ENCODE measurements at regions of chr12 and their contacts with region 1.

Region 1: GRCh38 chr12:86712425-86712843 is 456.2 kb upstream of the MGAT4C start:
- DNase-seq: peak; percentile 66
- H3K4me3 ChIP-seq: no peak overlapping the region
- H3K27ac ChIP-seq: no peak overlapping the region
- H3K4me1 ChIP-seq: no peaks in the 10 kb centered on the region
- H3K27me3 ChIP-seq: no peaks in the 10 kb centered on the region
- CTCF ChIP-seq: no peak

Region 2: DNA sequence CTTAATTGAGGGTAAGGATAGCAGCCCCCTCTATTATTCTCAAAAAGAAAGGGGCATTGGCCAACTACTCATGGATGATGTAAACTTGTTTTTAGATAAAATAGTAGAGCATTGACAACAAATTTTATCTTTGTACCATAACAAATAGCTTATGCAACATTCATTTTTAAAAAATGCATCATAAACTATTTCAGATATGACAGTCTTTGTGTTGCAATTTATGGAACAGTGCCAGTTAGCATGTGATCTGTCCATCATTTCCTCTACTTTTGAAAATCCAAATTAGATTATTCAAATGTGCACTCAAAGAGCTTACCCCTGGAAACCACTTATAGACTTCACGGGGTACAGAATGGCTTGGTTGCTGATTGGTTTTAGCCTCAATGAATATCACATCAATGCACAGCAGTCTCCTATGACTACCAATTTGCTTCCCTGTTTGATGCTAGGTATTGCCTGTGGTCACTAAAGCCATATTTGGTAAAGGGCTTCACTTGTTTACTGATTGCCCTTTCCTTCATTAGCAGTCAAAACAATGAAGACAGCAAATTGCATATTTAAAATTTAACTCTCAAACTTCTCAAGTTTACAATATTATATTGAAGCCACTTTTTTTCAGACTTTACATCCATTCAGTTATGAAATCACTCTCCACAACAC is 181.3 kb before region 1 on chr12:
- CTCF ChIA-PET with region 1: no interaction called
- POLR2A ChIA-PET with region 1: no interaction called
- intact Hi-C with region 1: no loop called
- DNase-seq: peak; percentile 58
- H3K4me3 ChIP-seq: no peak overlapping the region
- H3K27ac ChIP-seq: no peak overlapping the region
- H3K4me1 ChIP-seq: peaks cover 8% of the 10 kb centered on the region
- H3K27me3 ChIP-seq: no peaks in the 10 kb centered on the region
- CTCF ChIP-seq: no peak

Region 3: DNA sequence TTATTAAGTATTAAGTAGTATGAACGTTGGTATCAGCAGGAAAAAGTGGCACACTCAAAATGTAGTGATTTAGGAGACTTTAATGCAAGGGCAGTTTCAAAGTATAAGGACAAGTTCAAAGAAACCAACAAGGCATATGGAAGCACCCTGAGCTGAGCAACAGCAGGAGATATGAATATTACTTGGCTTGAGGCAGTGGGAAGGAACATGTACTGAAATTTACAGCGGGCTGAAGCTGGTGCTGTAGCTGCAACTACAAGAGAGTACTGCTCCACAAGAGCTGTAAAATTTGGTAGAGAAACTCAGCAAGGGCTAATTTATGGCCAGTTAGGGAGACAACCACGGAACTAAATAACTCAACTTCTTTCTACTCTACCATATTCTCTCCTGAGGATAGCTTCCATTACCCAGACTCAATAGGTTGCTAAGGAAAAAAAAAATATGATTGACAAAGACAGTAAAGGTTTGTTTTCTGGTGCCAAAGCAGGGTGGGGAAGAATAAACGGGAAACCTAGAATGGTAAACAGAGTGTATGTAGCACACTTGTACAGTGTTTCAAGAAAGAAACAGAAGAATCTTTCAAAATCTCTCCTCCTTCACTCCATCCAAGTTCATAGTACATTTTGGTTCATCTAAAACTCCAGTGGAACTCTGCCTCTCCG is 31.6 kb after region 1 on chr12:
- CTCF ChIA-PET with region 1: no interaction called
- POLR2A ChIA-PET with region 1: no interaction called
- intact Hi-C with region 1: loop called (anchors 1 kb)
- DNase-seq: no peak
- H3K4me3 ChIP-seq: no peak overlapping the region
- H3K27ac ChIP-seq: no peak overlapping the region
- H3K4me1 ChIP-seq: no peaks in the 10 kb centered on the region
- H3K27me3 ChIP-seq: no peaks in the 10 kb centered on the region
- CTCF ChIP-seq: no peak

Region 4: GRCh38 chr12:86929962-86930361 is 217.5 kb after region 1 on chr12:
- CTCF ChIA-PET with region 1: no interaction called
- POLR2A ChIA-PET with region 1: no interaction called
- intact Hi-C with region 1: no loop called
- DNase-seq: no peak
- H3K4me3 ChIP-seq: no peak overlapping the region
- H3K27ac ChIP-seq: no peak overlapping the region
- H3K4me1 ChIP-seq: no peaks in the 10 kb centered on the region
- H3K27me3 ChIP-seq: no peaks in the 10 kb centered on the region
- CTCF ChIP-seq: no peak

Region 5: DNA sequence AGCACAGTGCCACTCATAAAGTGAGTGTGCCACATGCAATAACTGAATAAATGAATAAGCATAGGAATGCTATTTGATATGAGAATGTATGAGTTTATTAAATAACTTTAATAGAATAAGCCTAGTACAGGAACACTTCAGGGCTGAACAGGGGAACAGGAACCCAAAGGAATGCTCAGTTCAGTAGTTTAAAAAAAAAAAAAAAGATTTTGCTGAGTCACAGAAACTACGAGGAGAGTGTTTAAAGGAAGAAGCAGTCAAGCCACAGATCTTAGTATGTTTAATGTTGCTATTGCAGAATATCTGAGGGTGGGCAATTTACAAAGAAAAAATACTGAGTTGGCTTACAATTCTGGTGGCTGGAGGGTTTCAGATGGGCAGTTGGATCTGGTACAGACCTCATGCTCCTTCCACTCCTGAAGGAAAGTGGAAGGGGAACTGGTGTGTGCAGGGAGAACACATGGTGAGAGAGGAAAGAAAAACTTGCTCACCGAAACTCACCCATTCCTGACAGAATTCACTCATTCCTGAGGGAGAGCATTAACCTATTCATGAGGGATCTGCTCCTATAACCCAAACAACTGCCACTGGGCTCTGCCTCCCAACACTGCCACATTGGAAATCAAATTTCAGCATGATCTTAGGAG is 424.0 kb after region 1 on chr12:
- CTCF ChIA-PET with region 1: no interaction called
- POLR2A ChIA-PET with region 1: no interaction called
- intact Hi-C with region 1: no loop called
- DNase-seq: no peak
- H3K4me3 ChIP-seq: no peak overlapping the region
- H3K27ac ChIP-seq: no peak overlapping the region
- H3K4me1 ChIP-seq: no peaks in the 10 kb centered on the region
- H3K27me3 ChIP-seq: no peaks in the 10 kb centered on the region
- CTCF ChIP-seq: no peak

Measured in A673 (cell line).